GM10248 (cell line): ENCODE measurements at regions of chr12 and their contacts with region 1.

Region 1: GRCh38 chr12:120833849-120834248 is 70.3 kb downstream of the SPPL3 start:
- DNase-seq: no peak
- CTCF ChIP-seq: no peak

Region 2: GRCh38 chr12:120725659-120726509 is 108.0 kb before region 1 on chr12 and contains the start of gene ACADS:
- CTCF ChIA-PET with region 1: no interaction called
- POLR2A ChIA-PET with region 1: no interaction called
- DNase-seq: peak; percentile 99
- CTCF ChIP-seq: no peak

Region 3: DNA sequence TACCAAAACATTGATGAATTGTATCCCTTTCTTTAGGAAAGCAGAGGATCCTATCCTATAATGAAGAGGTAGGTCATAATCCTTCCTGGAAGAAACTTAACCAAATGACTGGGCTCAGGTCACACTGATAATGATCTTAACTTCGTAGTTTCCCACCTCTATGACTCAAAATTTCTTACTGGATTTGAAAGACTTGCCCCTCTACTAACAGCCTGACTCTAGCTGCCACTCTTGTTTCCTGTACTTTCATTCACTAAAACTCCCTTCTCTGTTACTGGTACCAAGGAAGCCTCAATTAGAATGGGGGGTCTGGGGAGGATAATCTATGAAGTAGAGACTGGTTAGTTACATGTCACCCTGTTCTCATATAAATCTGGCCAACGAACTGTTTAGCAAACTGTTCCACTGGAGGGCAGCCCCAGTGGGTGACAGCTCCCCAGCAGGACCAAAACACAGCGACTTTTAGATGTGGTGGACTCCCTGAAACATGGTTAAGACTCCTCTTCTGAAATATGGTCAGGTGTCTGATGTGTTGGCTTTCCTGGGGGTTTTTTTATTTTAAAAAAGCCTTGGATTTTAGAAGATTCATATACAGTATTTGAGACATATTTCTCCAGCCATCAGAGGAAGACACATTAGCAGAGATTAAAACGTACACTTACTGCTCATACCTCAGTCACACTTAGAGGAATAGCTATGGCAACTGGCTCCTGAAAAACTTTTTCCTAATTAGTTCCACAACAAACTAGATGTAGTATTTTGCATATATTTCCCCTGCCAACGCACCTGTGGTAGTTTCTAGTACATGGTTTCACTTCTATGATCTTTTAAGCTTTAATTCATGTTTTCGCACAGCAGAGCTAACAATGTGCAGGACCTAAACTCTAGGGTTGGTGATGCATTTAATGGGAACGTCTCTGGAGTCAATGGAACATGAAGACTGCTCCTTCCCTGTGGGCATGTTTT is 35.9 kb before region 1 on chr12:
- CTCF ChIA-PET with region 1: interaction called, 13 read pairs
- POLR2A ChIA-PET with region 1: no interaction called
- DNase-seq: peak; percentile 22
- CTCF ChIP-seq: no peak

Region 4: DNA sequence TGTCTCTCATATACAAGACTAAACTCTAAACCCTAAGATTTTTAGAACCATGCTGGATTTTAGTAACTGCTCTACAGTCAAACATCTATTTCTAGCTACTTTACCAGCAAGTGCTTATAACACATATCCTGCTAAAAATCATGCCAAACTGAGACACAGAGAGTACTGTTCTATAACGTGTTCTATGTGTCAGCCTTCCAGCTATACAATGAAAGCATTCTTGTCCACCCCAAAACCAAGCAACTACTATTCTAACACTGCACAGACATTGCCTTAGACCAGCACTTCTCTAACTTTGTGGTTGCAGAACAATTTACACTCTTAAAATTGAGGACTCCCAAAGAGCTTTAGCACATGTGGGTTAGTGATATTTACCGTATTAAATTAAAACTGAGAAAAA is 15.4 kb before region 1 on chr12:
- CTCF ChIA-PET with region 1: interaction called, 10 read pairs
- POLR2A ChIA-PET with region 1: no interaction called
- DNase-seq: no peak
- CTCF ChIP-seq: no peak

Region 5: DNA sequence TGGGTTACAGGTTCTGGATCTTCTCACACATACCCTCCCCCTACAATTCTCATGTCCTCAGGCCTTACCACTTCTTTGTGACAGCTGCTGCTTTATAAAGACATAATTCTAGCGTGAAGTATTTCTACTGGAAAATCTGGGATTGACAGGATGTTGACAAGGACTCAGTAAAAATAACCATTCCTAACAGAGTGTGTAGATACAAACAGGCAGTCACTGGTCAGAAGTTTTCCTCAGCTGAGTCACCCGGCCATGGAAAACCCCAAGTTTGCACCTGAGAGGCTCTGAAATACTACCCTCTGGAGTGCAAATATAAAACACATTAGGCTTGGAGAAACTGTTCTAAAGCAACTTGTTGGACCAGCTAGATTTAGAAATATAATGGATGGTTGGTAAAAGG is 15.9 kb after region 1 on chr12:
- CTCF ChIA-PET with region 1: interaction called, 11 read pairs
- POLR2A ChIA-PET with region 1: no interaction called
- DNase-seq: no peak
- CTCF ChIP-seq: no peak